Calu3 (cell line): ENCODE measurements at regions of chr18 and their contacts with region 1.

Region 1: DNA sequence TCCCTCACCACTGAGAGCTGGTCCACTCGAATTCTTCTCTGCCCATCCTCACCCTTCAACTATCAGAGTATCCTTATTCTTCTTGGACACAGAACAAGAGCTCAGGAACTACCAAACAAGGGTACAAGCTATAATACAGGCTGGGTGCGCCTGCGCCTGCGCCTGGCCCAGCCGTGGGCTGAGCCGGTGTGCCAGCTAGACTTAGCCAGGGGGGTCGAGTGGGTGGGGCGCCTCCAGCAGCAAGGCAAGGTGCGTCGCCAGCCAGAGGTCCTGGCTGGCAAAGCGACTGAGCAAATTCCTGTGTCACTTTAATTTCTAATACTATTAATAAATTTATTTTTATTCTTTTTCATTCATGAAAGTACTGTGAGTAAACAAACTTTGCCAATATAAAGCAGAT is 1072.6 kb upstream of the PIK3C3 start:
- DNase-seq: no peak
- H3K4me3 Mint-ChIP-seq: no peak overlapping the region
- H3K27ac Mint-ChIP-seq: no peak overlapping the region
- H3K4me1 Mint-ChIP-seq: no peaks in the 10 kb centered on the region
- H3K27me3 Mint-ChIP-seq: no peaks in the 10 kb centered on the region
- CTCF ChIP-seq: no peak

Region 2: GRCh38 chr18:40810371-40810770 is 72.1 kb before region 1 on chr18:
- CTCF ChIA-PET with region 1: no interaction called
- intact Hi-C with region 1: loop called (anchors 2 kb)
- DNase-seq: no peak
- H3K4me3 Mint-ChIP-seq: no peak overlapping the region
- H3K27ac Mint-ChIP-seq: no peak overlapping the region
- H3K4me1 Mint-ChIP-seq: peaks cover 6% of the 10 kb centered on the region
- H3K27me3 Mint-ChIP-seq: no peaks in the 10 kb centered on the region
- CTCF ChIP-seq: no peak